Naive thymus-derived CD4-positive, alpha-beta T cell (primary cell): ENCODE measurements at regions of chr19 and their contacts with region 1.

Region 1: GRCh38 chr19:28633319-28634018 is 579.5 kb downstream of the UQCRFS1 start:
- DNase-seq: peak in 7 of 9 donors; percentile 16 to 65 (median 32)
- ATAC-seq: peak; percentile 79
- H3K4me3 ChIP-seq: no peak overlapping the region
- H3K4me3 Mint-ChIP-seq: no peak overlapping the region
- H3K27ac ChIP-seq: no peak overlapping the region
- H3K27ac Mint-ChIP-seq: peak overlapping the region in 3 of 9 donors; percentile 40 to 80 (median 71)
- H3K4me1 ChIP-seq: no peaks in the 10 kb centered on the region
- H3K4me1 Mint-ChIP-seq: peaks cover 0 to 31% (median 0%) of the 10 kb centered on the region in 7 donors
- H3K27me3 ChIP-seq: no peaks in the 10 kb centered on the region
- H3K27me3 Mint-ChIP-seq: peaks cover 0 to 2% (median 0%) of the 10 kb centered on the region in 5 donors

Region 2: GRCh38 chr19:28242297-28242927 is 391.1 kb before region 1 on chr19:
- CTCF ChIA-PET with region 1: no interaction called
- POLR2A ChIA-PET with region 1: no interaction called
- intact Hi-C with region 1: loop called in 1 of 2 experiments (anchors 1 kb)
- DNase-seq: peak in 1 of 9 donors; percentile 27
- ATAC-seq: no peak
- H3K4me3 ChIP-seq: no peak overlapping the region
- H3K4me3 Mint-ChIP-seq: no peak overlapping the region
- H3K27ac ChIP-seq: no peak overlapping the region
- H3K27ac Mint-ChIP-seq: no peak overlapping the region
- H3K4me1 ChIP-seq: no peaks in the 10 kb centered on the region
- H3K4me1 Mint-ChIP-seq: peaks cover 0 to 2% (median 0%) of the 10 kb centered on the region in 7 donors
- H3K27me3 ChIP-seq: no peaks in the 10 kb centered on the region
- H3K27me3 Mint-ChIP-seq: no peaks in the 10 kb centered on the region

Region 3: GRCh38 chr19:28393574-28394336 is 239.7 kb before region 1 on chr19:
- CTCF ChIA-PET with region 1: no interaction called
- POLR2A ChIA-PET with region 1: no interaction called
- intact Hi-C with region 1: loop called in 1 of 2 experiments (anchors 5 kb)
- DNase-seq: no peak
- ATAC-seq: peak; percentile 20
- H3K4me3 ChIP-seq: no peak overlapping the region
- H3K4me3 Mint-ChIP-seq: peak overlapping the region in 7 of 10 donors; percentile 12 to 79 (median 42)
- H3K27ac ChIP-seq: no peak overlapping the region
- H3K27ac Mint-ChIP-seq: peak overlapping the region in 3 of 9 donors; percentile 67 to 89 (median 87)
- H3K4me1 ChIP-seq: no peaks in the 10 kb centered on the region
- H3K4me1 Mint-ChIP-seq: peaks cover 6 to 60% (median 9%) of the 10 kb centered on the region in 7 donors
- H3K27me3 ChIP-seq: no peaks in the 10 kb centered on the region
- H3K27me3 Mint-ChIP-seq: no peaks in the 10 kb centered on the region

Region 4: DNA sequence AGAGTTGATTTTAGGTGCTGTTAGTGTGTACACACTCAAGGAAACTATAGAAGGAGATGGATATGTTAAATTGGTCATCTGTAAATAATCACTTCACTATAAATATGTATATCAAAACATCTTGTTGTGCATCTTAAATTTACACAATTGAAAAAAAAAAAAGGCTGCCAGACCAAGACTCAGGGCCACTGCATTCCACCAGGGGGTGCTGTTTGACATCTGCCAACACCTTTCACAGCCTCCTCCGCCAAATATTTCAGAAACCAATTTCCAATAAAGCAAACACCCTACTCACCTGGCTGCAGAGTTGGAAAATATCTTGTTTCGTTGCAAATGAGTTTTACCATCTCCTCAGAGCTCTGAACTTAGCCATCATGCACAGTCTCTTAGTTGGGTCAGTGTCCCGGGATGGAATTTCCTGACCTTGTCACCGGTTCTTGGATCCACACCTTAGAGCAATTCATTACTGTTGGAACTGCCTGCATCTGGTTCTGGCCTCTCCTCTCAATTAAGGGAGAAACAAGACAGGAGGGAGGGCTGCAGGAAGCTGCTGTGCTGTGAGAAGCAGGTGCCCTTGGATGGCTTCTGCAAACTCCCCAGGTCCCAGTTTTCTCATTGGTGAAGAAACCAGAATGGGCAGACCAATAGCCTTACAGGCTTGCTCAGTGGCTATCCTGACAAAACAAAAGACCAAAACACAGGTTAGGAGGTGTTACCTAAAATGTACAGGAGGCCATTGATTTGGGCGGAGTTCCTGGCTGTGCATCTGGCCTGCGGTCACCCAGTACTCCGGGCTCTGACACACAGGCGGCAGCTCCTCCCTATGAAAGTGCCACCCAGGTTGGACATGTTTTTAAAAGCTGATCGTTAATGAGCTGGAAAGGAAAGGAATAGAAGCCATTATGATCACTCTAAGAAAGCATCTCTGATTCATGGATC is 167.1 kb before region 1 on chr19:
- CTCF ChIA-PET with region 1: interaction called, 3 read pairs
- POLR2A ChIA-PET with region 1: no interaction called
- intact Hi-C with region 1: loop called in 1 of 2 experiments (anchors 1 kb)
- DNase-seq: peak; percentile 22 to 68 (median 50)
- ATAC-seq: peak; percentile 61
- H3K4me3 ChIP-seq: no peak overlapping the region
- H3K4me3 Mint-ChIP-seq: peak overlapping the region in 1 of 10 donors; percentile 8
- H3K27ac ChIP-seq: no peak overlapping the region
- H3K27ac Mint-ChIP-seq: peak overlapping the region in 2 of 9 donors; percentile 62 to 83
- H3K4me1 ChIP-seq: peaks cover 11 to 15% of the 10 kb centered on the region in 2 donors
- H3K4me1 Mint-ChIP-seq: peaks cover 7 to 57% (median 25%) of the 10 kb centered on the region in 7 donors
- H3K27me3 ChIP-seq: no peaks in the 10 kb centered on the region
- H3K27me3 Mint-ChIP-seq: peaks cover 0 to 6% (median 0%) of the 10 kb centered on the region in 5 donors

Region 5: DNA sequence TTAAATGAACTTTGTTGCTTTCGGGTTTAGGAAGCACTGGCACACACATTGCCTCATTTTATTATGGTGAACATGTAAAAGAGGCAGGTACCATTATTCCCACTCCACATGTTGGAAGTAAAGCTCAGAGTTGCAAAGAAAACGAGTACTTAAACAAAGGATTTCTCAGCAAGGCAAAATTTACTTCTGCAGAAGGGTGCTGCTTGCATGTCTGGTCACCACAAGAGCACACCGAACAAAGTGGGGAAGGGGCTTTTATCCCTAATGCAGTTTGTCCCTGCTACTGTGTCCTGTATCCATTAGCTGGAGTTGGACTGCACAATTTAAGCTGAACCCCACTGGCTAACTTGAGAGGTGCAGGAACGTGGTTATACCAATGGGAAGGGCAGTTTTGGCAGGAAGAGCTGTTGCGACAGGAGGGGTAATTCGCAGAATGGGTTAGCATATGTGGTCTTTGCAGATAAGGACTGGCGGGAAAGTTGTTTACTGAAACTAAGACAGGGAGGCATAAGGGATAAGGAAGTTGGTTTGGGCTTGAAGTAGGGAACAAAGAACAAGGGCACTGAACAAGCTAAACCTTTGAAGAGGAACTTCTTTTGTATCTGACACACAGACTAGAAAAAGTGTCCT is 34.0 kb after region 1 on chr19:
- CTCF ChIA-PET with region 1: no interaction called
- POLR2A ChIA-PET with region 1: no interaction called
- intact Hi-C with region 1: no loop called
- DNase-seq: no peak
- ATAC-seq: no peak
- H3K4me3 ChIP-seq: no peak overlapping the region
- H3K4me3 Mint-ChIP-seq: no peak overlapping the region
- H3K27ac ChIP-seq: no peak overlapping the region
- H3K27ac Mint-ChIP-seq: no peak overlapping the region
- H3K4me1 ChIP-seq: no peaks in the 10 kb centered on the region
- H3K4me1 Mint-ChIP-seq: no peaks in the 10 kb centered on the region
- H3K27me3 ChIP-seq: no peaks in the 10 kb centered on the region
- H3K27me3 Mint-ChIP-seq: peaks cover 0 to 12% (median 0%) of the 10 kb centered on the region in 5 donors

Region 6: DNA sequence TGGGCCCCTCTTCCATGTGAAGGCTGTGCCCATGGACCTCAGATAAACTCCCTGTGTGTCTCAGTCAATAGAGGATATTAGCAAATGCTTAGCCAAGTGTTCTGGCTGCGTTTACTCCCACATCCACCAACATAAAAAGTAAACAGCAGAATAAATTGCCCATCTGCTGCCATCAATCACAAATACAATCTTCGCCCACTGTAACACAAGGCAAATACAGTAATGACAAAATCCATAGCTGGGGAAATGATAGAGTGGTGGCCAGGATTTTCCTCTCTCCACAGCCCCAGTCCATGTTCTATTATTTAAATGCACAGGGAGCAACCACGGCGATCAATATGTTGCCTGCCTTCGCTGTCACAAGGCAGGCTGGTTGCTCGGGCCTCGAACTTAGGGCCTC is 203.0 kb after region 1 on chr19:
- CTCF ChIA-PET with region 1: no interaction called
- POLR2A ChIA-PET with region 1: no interaction called
- intact Hi-C with region 1: no loop called
- DNase-seq: no peak
- ATAC-seq: no peak
- H3K4me3 ChIP-seq: no peak overlapping the region
- H3K4me3 Mint-ChIP-seq: no peak overlapping the region
- H3K27ac ChIP-seq: no peak overlapping the region
- H3K27ac Mint-ChIP-seq: no peak overlapping the region
- H3K4me1 ChIP-seq: no peaks in the 10 kb centered on the region
- H3K4me1 Mint-ChIP-seq: no peaks in the 10 kb centered on the region
- H3K27me3 ChIP-seq: no peaks in the 10 kb centered on the region
- H3K27me3 Mint-ChIP-seq: peaks cover 0 to 13% (median 4%) of the 10 kb centered on the region in 5 donors